Ascending aorta (tissue), 2 donors: ENCODE measurements at regions of chr11 and their contacts with region 1.

Region 1: DNA sequence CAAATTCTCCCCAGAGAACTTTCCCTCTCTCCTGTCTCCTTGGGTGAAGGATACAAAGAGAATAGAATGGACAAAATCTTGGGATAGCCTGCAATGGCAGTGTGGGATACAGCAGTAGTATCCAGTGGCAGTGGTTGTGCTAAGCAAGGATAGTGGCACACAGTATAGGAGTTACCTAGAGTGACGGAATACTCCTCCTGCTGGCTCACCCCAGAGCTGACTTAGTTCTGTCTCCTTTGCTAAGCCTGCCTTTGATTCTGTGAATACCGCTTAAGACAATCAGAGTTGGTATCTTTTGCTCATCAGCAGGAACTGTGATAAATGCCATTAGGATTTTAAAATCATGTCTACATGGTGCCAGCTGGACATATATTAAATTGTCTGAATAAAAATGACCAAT is 404.3 kb downstream of the JRKL start:
- DNase-seq: no peak
- H3K4me3 ChIP-seq: no peak overlapping the region
- H3K27ac ChIP-seq: no peak overlapping the region
- H3K4me1 ChIP-seq: no peaks in the 10 kb centered on the region
- H3K27me3 ChIP-seq: no peaks in the 10 kb centered on the region
- CTCF ChIP-seq: no peak

Region 2: GRCh38 chr11:96464700-96465307 is 329.3 kb before region 1 on chr11:
- intact Hi-C with region 1: loop called (anchors 2 kb)
- DNase-seq: no peak
- H3K4me3 ChIP-seq: no peak overlapping the region
- H3K27ac ChIP-seq: no peak overlapping the region
- H3K4me1 ChIP-seq: peaks cover 0 to 5% of the 10 kb centered on the region in 2 donors
- H3K27me3 ChIP-seq: no peaks in the 10 kb centered on the region
- CTCF ChIP-seq: peak; percentile 17 to 74 (median 70)

Region 3: DNA sequence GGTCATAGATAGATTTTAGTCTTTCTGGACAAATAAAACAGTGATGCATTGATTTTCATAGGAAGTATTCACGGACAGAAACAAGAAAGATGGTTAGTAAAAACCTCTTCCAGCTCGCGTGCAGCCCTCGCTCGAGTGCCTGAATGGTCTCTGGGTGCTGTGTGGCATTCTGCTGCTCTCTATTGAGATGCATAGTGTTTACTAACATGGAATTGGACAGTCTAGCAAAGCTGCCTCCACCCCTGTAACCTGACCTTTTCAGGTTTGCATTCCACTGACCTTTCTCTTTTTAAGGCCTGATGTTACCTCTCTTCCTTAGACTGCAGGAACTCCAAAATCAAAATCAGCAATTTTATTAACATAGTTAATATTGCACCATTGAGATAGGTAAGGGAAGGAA is 239.0 kb after region 1 on chr11:
- intact Hi-C with region 1: no loop called
- DNase-seq: no peak
- H3K4me3 ChIP-seq: no peak overlapping the region
- H3K27ac ChIP-seq: no peak overlapping the region
- H3K4me1 ChIP-seq: no peaks in the 10 kb centered on the region
- H3K27me3 ChIP-seq: no peaks in the 10 kb centered on the region
- CTCF ChIP-seq: no peak